CD4-positive, alpha-beta T cell (primary cell): ENCODE measurements at regions of chr5 and their contacts with region 1.

Region 1: GRCh38 chr5:111537141-111538024 is 25.0 kb upstream of the STARD4 start:
- DNase-seq: no peak
- ATAC-seq: no peak
- H3K4me3 ChIP-seq: no peak overlapping the region
- H3K4me3 Mint-ChIP-seq: no peak overlapping the region
- H3K27ac ChIP-seq: no peak overlapping the region
- H3K27ac Mint-ChIP-seq: no peak overlapping the region
- H3K4me1 ChIP-seq: no peaks in the 10 kb centered on the region
- H3K4me1 Mint-ChIP-seq: no peaks in the 10 kb centered on the region
- H3K27me3 ChIP-seq: peaks cover 0 to 5% of the 10 kb centered on the region in 2 experiments
- H3K27me3 Mint-ChIP-seq: peaks cover 14% of the 10 kb centered on the region
- CTCF ChIP-seq: no peak

Region 2: DNA sequence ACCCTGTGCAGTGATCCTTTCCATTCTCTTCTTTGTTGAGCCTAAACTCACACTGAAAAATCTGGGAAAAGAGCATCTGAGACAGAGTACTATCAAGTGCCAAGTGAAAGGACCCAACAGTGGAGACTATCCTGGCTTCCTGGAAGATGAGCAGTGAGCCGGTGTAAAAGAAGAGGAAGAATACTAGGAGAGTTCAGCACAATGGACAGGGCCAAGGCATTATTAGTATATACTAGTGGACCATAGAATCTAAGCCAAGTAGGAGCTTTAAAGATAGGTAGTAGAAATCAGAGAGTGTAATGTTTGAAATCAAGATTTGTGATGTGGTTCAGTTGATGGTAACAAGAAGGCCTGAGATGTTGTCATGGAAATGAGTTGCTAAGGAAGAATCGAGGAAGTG is 172.4 kb before region 1 on chr5:
- CTCF ChIA-PET with region 1: no interaction called
- POLR2A ChIA-PET with region 1: no interaction called
- intact Hi-C with region 1: no loop called
- DNase-seq: peak in 1 of 14 experiments; percentile 8
- ATAC-seq: no peak
- H3K4me3 ChIP-seq: no peak overlapping the region
- H3K4me3 Mint-ChIP-seq: no peak overlapping the region
- H3K27ac ChIP-seq: no peak overlapping the region
- H3K27ac Mint-ChIP-seq: peak overlapping the region; percentile 14
- H3K4me1 ChIP-seq: peaks cover 5% of the 10 kb centered on the region
- H3K4me1 Mint-ChIP-seq: peaks cover 78% of the 10 kb centered on the region
- H3K27me3 ChIP-seq: no peaks in the 10 kb centered on the region
- H3K27me3 Mint-ChIP-seq: no peaks in the 10 kb centered on the region
- CTCF ChIP-seq: no peak

Region 3: DNA sequence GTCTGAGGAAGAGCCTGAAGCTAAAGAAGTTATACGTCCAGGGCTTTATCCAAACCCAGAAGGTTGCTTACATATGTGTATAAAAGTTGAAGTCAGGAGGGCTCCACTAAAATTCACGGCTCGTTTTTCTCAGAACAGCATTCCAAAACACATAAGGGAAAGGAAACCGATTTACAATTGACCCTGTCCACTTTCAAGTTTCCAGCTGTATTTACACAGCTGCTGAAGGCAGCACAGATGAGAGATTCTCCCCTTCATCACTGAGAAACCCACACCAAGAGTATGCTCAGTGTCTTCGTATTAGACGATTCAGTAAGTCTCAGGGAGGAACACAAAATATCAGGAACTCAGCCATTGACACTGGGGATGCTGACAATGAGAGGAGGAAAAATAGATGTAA is 225.5 kb after region 1 on chr5:
- CTCF ChIA-PET with region 1: no interaction called
- POLR2A ChIA-PET with region 1: no interaction called
- intact Hi-C with region 1: loop called in 1 of 2 experiments (anchors 5 kb)
- DNase-seq: no peak
- ATAC-seq: no peak
- H3K4me3 ChIP-seq: no peak overlapping the region
- H3K4me3 Mint-ChIP-seq: no peak overlapping the region
- H3K27ac ChIP-seq: no peak overlapping the region
- H3K27ac Mint-ChIP-seq: no peak overlapping the region
- H3K4me1 ChIP-seq: peaks cover 3% of the 10 kb centered on the region
- H3K4me1 Mint-ChIP-seq: peaks cover 6% of the 10 kb centered on the region
- H3K27me3 ChIP-seq: no peaks in the 10 kb centered on the region
- H3K27me3 Mint-ChIP-seq: peaks cover 7% of the 10 kb centered on the region
- CTCF ChIP-seq: no peak